Activated CD8-positive, alpha-beta T cell treated with anti-CD3 and anti-CD28 coated beads for 36 hours (primary cell): ENCODE measurements at regions of chr21 and their contacts with region 1.

Region 1: GRCh38 chr21:42424914-42425541 is 21.3 kb downstream of the UBASH3A start:
- DNase-seq: peak; percentile 87
- ATAC-seq: peak; percentile 65
- H3K4me3 Mint-ChIP-seq: peak overlapping the region; percentile 74
- H3K27ac Mint-ChIP-seq: peak overlapping the region; percentile 93
- H3K4me1 Mint-ChIP-seq: peaks cover 73% of the 10 kb centered on the region
- H3K27me3 Mint-ChIP-seq: no peaks in the 10 kb centered on the region
- CTCF ChIP-seq: no peak

Region 2: GRCh38 chr21:42381334-42381984 is 43.6 kb before region 1 on chr21:
- CTCF ChIA-PET with region 1: interaction called, 13 read pairs
- POLR2A ChIA-PET with region 1: interaction called, 3 read pairs
- intact Hi-C with region 1: no loop called
- DNase-seq: peak; percentile 53
- ATAC-seq: peak; percentile 68
- H3K4me3 Mint-ChIP-seq: no peak overlapping the region
- H3K27ac Mint-ChIP-seq: no peak overlapping the region
- H3K4me1 Mint-ChIP-seq: peaks cover 20% of the 10 kb centered on the region
- H3K27me3 Mint-ChIP-seq: no peaks in the 10 kb centered on the region
- CTCF ChIP-seq: peak; percentile 70

Region 3: GRCh38 chr21:42392721-42393442 is 32.1 kb before region 1 on chr21:
- CTCF ChIA-PET with region 1: interaction called, 8 read pairs
- POLR2A ChIA-PET with region 1: interaction called, 21 read pairs
- intact Hi-C with region 1: no loop called
- DNase-seq: peak; percentile 41
- ATAC-seq: peak; percentile 94
- H3K4me3 Mint-ChIP-seq: peak overlapping the region; percentile 65
- H3K27ac Mint-ChIP-seq: peak overlapping the region; percentile 88
- H3K4me1 Mint-ChIP-seq: peaks cover 77% of the 10 kb centered on the region
- H3K27me3 Mint-ChIP-seq: no peaks in the 10 kb centered on the region
- CTCF ChIP-seq: no peak

Region 4: DNA sequence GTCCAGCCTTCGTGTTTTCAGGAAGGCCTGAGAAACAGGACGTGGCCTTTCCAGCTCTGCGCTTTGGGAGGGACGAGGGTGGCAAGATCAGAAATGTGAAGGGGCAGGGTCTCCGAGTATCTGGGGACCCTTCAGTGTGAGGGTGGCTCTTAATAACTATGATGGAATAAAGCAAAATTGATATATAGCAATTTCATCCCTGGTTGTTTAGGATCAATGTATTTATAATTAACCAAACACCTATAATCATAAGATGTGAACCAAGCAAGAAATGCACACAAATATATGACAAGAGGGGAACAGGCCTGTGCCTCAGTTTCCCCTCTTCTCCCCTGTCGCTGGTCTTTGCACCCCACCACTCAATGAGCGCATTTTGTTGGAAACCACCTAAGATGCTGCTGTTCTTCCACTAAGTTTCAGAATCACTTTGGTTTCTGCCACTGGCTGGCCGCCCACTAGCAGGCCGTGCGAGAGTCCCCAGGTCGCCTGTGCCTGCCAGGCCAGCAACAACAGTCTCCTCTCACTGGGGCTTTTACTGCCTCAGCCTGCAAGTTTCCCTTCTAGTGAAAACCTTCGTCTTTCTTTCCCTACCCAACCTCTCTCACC is 15.3 kb after region 1 on chr21:
- CTCF ChIA-PET with region 1: interaction called, 3 read pairs
- POLR2A ChIA-PET with region 1: interaction called, 10 read pairs
- intact Hi-C with region 1: no loop called
- DNase-seq: peak; percentile 85
- ATAC-seq: peak; percentile 67
- H3K4me3 Mint-ChIP-seq: peak overlapping the region; percentile 44
- H3K27ac Mint-ChIP-seq: peak overlapping the region; percentile 94
- H3K4me1 Mint-ChIP-seq: peaks cover 58% of the 10 kb centered on the region
- H3K27me3 Mint-ChIP-seq: peaks cover 2% of the 10 kb centered on the region
- CTCF ChIP-seq: no peak

Region 5: GRCh38 chr21:42711667-42712066 is 286.6 kb after region 1 on chr21:
- CTCF ChIA-PET with region 1: no interaction called
- POLR2A ChIA-PET with region 1: no interaction called
- intact Hi-C with region 1: no loop called
- DNase-seq: no peak
- ATAC-seq: no peak
- H3K4me3 Mint-ChIP-seq: no peak overlapping the region
- H3K27ac Mint-ChIP-seq: no peak overlapping the region
- H3K4me1 Mint-ChIP-seq: no peaks in the 10 kb centered on the region
- H3K27me3 Mint-ChIP-seq: no peaks in the 10 kb centered on the region
- CTCF ChIP-seq: no peak